ENCODE measurements at regions of chr12 and their contacts with region 1.

Region 1: DNA sequence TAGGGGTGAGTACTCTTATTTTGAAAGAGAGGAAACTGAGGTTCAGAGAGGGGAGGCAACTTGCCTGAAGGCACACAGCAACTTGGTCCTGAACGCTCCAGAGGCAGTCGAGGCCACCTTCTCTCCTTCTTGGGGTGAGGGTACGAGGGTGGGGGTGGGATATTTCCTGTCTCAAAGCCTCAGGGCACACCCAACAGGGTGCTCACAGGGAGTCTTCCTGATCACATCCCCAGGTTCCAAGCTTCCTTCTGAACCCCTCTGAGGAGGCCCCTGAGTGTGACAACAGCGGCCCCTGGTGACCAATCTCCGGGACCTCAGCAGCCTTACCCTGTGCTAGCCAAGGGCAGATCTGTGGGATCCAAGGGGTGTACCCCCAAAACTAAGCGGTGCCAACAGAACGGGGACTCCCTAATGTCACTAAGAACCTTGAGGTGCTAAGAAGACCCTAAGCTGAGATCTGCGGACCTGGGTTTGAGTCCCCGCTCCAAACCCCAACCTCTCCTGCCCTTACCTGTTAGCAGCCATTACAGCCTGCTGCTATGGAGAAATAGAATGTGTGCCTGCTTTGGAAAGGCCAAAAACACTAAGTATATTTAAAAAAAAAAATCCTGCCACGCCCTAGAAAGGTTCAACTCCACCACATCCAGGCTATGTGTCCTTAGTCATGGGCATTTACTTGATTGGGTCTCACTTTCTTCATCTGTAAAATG is 57.9 kb downstream of the TRPV4 start:
- DNase-seq: peak; percentile 82
- H3K4me3 ChIP-seq: no peak overlapping the region
- H3K27ac ChIP-seq: no peak overlapping the region
- H3K4me1 ChIP-seq: peaks cover 0 to 9% (median 3%) of the 10 kb centered on the region in 4 donors
- H3K27me3 ChIP-seq: no peaks in the 10 kb centered on the region
- CTCF ChIP-seq: peak; percentile 84 to 90 (median 86)
- EP300 ChIP-seq: no peak
- POLR2A ChIP-seq: no peak

Region 2: DNA sequence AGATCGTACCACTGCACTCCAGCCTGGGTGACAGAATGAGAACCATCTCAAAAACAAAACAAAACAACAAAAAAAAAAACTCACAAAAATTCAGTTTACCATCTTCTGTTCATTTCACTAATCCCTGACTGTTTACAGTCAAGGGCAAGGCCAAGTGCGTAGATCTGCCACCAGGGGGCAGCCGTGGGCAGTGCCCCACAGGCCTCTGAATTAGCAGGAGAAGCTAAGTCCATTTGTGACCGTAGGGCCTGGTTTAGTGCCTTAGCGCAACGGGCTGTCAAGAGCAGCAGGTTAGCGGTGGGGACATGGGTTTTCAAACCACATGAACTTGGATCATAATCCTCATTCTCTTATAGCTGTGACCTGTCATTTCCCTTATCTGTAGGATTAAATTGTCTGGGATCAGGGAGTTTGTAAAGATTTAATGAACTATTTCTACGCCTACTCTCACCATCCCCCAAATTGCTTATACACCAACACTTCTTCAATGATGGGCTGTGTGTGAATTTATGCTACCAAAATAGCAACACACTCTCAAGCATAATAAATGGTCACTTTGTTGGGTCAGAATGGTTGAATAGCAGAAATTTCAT is 347.2 kb before region 1 on chr12:
- in situ Hi-C with region 1: loop called in 3 of 4 experiments (anchors 10 kb)
- intact Hi-C with region 1: no loop called
- DNase-seq: peak; percentile 88
- H3K4me3 ChIP-seq: no peak overlapping the region
- H3K27ac ChIP-seq: no peak overlapping the region
- H3K4me1 ChIP-seq: peaks cover 3 to 5% (median 3%) of the 10 kb centered on the region in 4 donors
- H3K27me3 ChIP-seq: no peaks in the 10 kb centered on the region
- CTCF ChIP-seq: peak; percentile 90 to 99 (median 97)
- EP300 ChIP-seq: no peak
- POLR2A ChIP-seq: no peak

Region 3: GRCh38 chr12:109518820-109519665 is 256.3 kb before region 1 on chr12:
- in situ Hi-C with region 1: loop called in 2 of 4 experiments (anchors 5 to 10 kb)
- intact Hi-C with region 1: no loop called
- DNase-seq: peak; percentile 59
- H3K4me3 ChIP-seq: no peak overlapping the region
- H3K27ac ChIP-seq: peak overlapping the region; percentile 30 to 55 (median 48)
- H3K4me1 ChIP-seq: no peaks in the 10 kb centered on the region
- H3K27me3 ChIP-seq: no peaks in the 10 kb centered on the region
- CTCF ChIP-seq: peak; percentile 68 to 85 (median 78)
- EP300 ChIP-seq: no peak
- POLR2A ChIP-seq: no peak

Region 4: DNA sequence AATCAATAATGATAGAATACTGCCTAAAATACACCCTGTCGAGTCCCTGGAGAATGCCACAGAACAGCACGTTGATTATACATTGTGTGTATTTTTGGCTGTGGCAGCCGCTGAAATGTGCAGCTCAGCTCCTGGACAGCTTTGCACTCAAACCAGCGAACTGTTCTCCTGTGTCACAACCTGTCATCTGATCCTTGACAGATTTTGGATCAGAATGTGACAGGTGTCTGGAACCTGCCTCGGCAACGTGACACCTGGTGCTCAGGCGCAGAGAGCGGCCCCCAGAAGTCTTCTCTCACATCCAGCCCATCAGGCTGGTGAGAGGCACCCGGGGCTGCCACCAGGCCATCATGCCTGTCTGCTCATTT is 182.4 kb before region 1 on chr12:
- in situ Hi-C with region 1: loop called in 2 of 4 experiments (anchors 5 kb)
- intact Hi-C with region 1: loop called (anchors 1 kb)
- DNase-seq: no peak
- H3K4me3 ChIP-seq: no peak overlapping the region
- H3K27ac ChIP-seq: no peak overlapping the region
- H3K4me1 ChIP-seq: peaks cover under 1 to 2% (median 2%) of the 10 kb centered on the region in 4 donors
- H3K27me3 ChIP-seq: no peaks in the 10 kb centered on the region
- CTCF ChIP-seq: no peak
- EP300 ChIP-seq: no peak
- POLR2A ChIP-seq: no peak

Region 5: GRCh38 chr12:109597795-109598427 is 177.4 kb before region 1 on chr12:
- in situ Hi-C with region 1: loop called in 3 of 4 experiments (anchors 5 to 10 kb)
- intact Hi-C with region 1: loop called (anchors 1 kb)
- DNase-seq: peak; percentile 84
- H3K4me3 ChIP-seq: no peak overlapping the region
- H3K27ac ChIP-seq: no peak overlapping the region
- H3K4me1 ChIP-seq: peaks cover 2 to 6% (median 3%) of the 10 kb centered on the region in 4 donors
- H3K27me3 ChIP-seq: no peaks in the 10 kb centered on the region
- CTCF ChIP-seq: peak; percentile 94 to 97 (median 95)
- EP300 ChIP-seq: no peak
- POLR2A ChIP-seq: no peak

Region 6: DNA sequence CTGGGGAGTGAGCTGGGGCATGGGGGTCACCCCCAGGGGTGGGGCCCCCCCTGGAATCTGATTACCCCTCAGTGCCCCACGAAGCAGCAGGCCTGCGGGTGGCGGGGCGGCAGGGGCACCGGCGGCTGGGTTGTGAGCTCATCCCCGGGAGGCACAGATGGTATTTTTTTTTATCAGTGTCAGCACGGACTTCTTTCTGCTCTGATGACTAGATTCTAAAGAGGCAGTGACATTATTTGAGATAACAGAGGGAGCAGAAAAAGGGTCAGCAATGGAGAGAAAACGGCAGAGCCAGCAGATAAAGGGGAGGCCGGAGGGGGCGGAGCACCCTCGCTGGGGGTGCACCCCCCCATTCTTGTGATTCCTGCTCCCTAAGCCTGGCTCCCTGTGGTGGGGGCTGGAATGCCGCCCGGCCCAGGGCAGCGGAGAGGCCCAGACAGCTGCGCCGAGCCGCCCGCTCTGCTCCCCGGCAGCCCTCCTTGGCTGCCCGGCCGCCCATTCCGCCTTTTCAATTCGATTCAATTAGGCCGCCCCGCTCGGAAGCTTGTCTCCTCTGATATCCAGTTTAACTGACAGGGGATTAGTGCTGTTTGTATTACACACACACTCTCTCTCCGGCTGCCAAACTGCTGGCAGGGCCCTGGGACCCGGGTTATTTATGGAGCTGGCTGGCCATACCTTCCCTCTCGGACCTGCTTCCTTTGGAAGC is 168.9 kb before region 1 on chr12:
- in situ Hi-C with region 1: loop called in 2 of 4 experiments (anchors 5 to 10 kb)
- intact Hi-C with region 1: no loop called
- DNase-seq: no peak
- H3K4me3 ChIP-seq: no peak overlapping the region
- H3K27ac ChIP-seq: no peak overlapping the region
- H3K4me1 ChIP-seq: peaks cover 0 to 5% (median 0%) of the 10 kb centered on the region in 4 donors
- H3K27me3 ChIP-seq: peaks cover 22% of the 10 kb centered on the region
- CTCF ChIP-seq: no peak
- EP300 ChIP-seq: no peak
- POLR2A ChIP-seq: no peak

Region 7: DNA sequence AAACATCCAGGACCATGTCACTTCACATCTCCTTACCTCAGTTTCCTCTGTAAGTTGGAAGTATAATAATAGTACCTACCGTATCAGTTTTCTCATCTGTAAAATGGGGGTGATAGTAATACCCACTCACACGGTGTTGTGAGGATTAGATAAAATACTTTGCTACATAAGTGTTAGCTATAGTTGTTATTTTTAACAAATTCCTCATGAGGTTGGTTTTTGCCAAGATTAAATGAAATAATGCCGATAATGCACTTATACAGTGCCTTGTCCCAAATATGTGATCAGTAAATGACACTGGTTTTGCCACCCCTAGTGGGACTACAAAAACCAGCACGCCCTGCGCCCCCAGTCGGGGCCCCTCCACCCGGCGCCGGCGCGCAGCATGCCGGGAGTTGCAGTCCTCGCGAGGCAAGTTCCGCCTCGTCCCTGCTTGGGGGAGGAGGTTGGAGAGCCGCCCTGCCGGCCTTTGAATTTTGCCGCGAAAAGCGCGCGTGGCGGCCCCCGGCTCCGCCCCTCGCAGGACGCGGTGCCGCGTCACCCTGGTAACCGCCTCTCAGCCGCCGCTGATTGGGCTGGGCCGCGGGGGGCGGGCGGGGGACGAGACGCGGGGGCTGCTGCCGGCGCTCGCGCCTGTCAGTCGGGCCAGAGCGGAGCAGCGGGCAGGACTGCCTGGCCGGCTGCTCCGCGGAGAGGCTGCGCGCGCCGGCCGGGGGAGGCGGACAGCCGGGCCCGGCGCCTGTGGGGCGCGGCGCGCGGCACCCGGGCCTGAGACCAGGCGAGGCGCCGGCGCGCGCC is 61.9 kb before region 1 on chr12 and contains the start of gene FAM222A:
- in situ Hi-C with region 1: no loop called
- intact Hi-C with region 1: loop called (anchors 10 kb)
- DNase-seq: peak; percentile 97
- H3K4me3 ChIP-seq: peak within 1 kb of the TSS; percentile 53 to 62 (median 58)
- H3K27ac ChIP-seq: peak within 1 kb of the TSS; percentile 77 to 86 (median 82)
- H3K4me1 ChIP-seq: peaks cover 8 to 29% (median 21%) of the 10 kb centered on the region in 4 donors
- H3K27me3 ChIP-seq: peaks cover 6% of the 10 kb centered on the region
- CTCF ChIP-seq: peak in 4 of 5 experiments; percentile 14 to 40 (median 24)
- EP300 ChIP-seq: no peak
- POLR2A ChIP-seq: no peak
- total RNA-seq, gene FAM222A: 1.4 to 3.0 (median 1.8) TPM

Region 8: DNA sequence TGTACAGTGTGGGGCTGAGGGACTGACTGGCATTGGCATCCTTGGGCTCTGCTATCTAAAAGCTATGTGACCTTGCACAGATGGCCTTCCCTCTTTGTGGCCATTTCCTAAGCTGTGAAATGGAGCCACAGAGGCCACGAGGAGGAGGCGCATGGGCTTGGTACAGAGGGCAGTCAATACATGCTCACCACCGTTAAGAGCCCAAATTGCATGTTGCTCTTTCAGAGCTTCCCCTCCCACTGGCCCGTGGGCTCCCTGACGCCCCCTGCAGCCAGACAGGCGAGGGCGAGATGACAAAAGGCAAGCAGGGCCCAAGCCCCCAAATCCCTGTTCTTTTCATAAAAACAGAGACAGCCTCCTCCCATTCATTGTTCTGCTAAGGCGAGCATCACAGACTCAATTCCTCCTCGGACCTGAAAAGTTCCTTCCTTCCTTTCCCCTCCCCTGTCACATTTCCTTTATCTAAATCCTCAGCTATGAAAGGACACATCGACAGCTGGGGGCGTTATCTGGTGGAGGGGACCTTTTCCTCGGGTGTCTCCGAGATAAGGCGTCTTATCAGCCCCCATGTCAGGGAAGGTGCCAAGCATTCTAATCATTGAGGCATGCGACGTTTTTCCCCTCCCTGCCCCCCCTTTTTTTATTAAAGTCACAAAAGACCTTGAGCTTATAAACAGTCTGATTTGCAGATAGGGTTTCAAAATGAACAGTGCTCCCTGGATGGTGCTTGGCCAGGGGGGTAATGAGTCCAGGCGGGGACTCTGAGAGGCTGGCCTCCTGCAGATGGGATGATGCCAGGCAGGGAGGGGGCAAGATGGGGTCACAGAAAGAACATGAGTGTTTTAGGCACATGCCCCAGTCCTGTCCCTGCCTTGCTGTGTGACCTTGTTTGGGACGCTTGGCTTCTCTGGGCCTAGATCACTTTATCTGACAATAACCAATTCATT is 35.3 kb before region 1 on chr12:
- in situ Hi-C with region 1: no loop called
- intact Hi-C with region 1: no loop called
- DNase-seq: no peak
- H3K4me3 ChIP-seq: no peak overlapping the region
- H3K27ac ChIP-seq: no peak overlapping the region
- H3K4me1 ChIP-seq: peaks cover 0 to 3% (median 0%) of the 10 kb centered on the region in 4 donors
- H3K27me3 ChIP-seq: no peaks in the 10 kb centered on the region
- CTCF ChIP-seq: no peak
- EP300 ChIP-seq: no peak
- POLR2A ChIP-seq: no peak

Region 9: DNA sequence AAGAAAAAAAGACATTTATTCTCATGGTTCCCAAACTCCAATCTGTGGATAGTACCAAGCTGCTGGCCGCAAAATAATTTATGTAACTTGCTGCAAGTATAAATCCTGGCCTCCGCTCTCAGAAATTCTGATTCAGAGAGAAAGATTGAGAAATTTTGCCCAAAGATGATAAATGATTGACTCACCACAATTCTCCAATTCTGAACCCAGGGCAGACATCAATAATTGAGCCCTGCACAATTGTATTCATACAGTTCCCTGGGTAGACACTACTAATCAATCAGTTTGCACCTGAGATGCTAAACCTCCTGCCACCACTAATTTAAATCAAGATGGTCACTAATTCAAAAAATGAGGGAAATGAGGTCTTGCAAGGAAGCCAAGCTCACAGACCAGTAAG is 19.7 kb after region 1 on chr12:
- in situ Hi-C with region 1: no loop called
- intact Hi-C with region 1: no loop called
- DNase-seq: no peak
- H3K4me3 ChIP-seq: no peak overlapping the region
- H3K27ac ChIP-seq: no peak overlapping the region
- H3K4me1 ChIP-seq: no peaks in the 10 kb centered on the region
- H3K27me3 ChIP-seq: no peaks in the 10 kb centered on the region
- CTCF ChIP-seq: no peak
- EP300 ChIP-seq: no peak
- POLR2A ChIP-seq: no peak

Measured in transverse colon (tissue), 4 donors.